Activated B cell treated with CpG ODN at 0.5 μM for 24 hours (primary cell): ENCODE measurements at regions of chr14 and their contacts with region 1.

Region 1: GRCh38 chr14:59483900-59484638 is at the starts of genes JKAMP and L3HYPDH:
- DNase-seq: peak; percentile 96
- ATAC-seq: peak; percentile 92
- H3K4me3 Mint-ChIP-seq: peak within 1 kb of the TSS; percentile 98
- H3K27ac Mint-ChIP-seq: peak within 1 kb of the TSS; percentile 96
- H3K4me1 Mint-ChIP-seq: peaks cover 52% of the 10 kb centered on the region
- H3K27me3 Mint-ChIP-seq: no peaks in the 10 kb centered on the region
- CTCF ChIP-seq: no peak
- total RNA-seq, gene JKAMP: 18.1 and 28.8 TPM in 2 replicates
- total RNA-seq, gene L3HYPDH: 22.1 and 30.2 TPM in 2 replicates

Region 2: GRCh38 chr14:58199726-58200479 is 1284.2 kb before region 1 on chr14 and contains the start of gene ACTR10:
- CTCF ChIA-PET with region 1: no interaction called
- POLR2A ChIA-PET with region 1: no interaction called
- intact Hi-C with region 1: loop called (anchors 1 kb)
- DNase-seq: peak; percentile 93
- ATAC-seq: peak; percentile 88
- H3K4me3 Mint-ChIP-seq: peak within 1 kb of the TSS; percentile 94
- H3K27ac Mint-ChIP-seq: peak within 1 kb of the TSS; percentile 93
- H3K4me1 Mint-ChIP-seq: peaks cover 28% of the 10 kb centered on the region
- H3K27me3 Mint-ChIP-seq: no peaks in the 10 kb centered on the region
- CTCF ChIP-seq: no peak
- total RNA-seq, gene ACTR10: 36.5 and 40.5 TPM in 2 replicates

Region 3: GRCh38 chr14:58427281-58428117 is 1056.6 kb before region 1 on chr14 and contains the starts of genes KIAA0586 and TIMM9:
- CTCF ChIA-PET with region 1: no interaction called
- POLR2A ChIA-PET with region 1: no interaction called
- intact Hi-C with region 1: loop called (anchors 1 kb)
- DNase-seq: peak; percentile 85
- ATAC-seq: peak; percentile 93
- H3K4me3 Mint-ChIP-seq: peak within 1 kb of the TSS; percentile 94
- H3K27ac Mint-ChIP-seq: peak within 1 kb of the TSS; percentile 97
- H3K4me1 Mint-ChIP-seq: peaks cover 46% of the 10 kb centered on the region
- H3K27me3 Mint-ChIP-seq: no peaks in the 10 kb centered on the region
- CTCF ChIP-seq: no peak
- total RNA-seq, gene KIAA0586: 18.3 and 19.8 TPM in 2 replicates
- total RNA-seq, gene TIMM9: 29.1 and 35.7 TPM in 2 replicates

Region 4: DNA sequence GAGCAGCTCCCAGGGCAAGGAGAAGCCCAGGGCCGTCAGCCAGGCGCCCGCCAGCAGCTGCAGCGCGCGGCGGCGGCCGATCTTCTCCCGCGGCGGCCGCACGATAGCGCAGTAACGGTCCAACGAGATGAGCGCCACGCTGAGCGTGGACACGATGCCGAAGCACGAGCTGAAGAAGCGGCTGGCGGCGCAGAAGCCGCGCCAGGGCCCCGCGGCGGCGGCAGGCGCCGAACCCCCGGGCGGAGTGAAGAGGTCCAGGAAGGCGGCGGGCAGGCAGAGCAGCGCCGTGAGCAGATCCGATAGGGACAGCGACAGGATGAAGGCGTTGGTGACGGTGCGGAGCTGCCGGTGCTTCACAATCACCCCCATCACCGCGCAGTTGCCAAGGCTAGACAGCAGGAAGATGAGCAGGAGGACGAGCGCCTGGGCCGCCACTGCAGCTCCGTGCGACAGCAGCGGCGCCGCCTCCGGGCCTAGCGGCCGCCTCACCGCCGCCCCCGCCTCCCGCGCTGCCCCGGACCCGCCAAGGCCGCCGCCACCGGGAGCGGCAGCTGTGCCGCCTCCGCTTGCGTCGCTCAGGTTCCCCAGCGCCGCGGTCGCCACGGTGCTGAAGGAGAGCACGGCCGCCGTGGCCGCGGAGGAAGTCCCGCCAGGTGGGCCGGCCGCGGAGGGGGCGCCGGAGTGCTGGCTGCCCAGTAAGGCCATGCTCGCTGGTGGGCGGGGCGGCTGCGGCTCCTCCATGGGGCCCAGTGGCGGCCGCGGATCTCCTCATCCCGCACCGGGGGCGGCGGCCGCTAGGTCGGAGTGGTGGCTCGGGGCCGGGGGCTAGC is 19.4 kb before region 1 on chr14:
- CTCF ChIA-PET with region 1: interaction called, 9 read pairs
- POLR2A ChIA-PET with region 1: interaction called, 13 read pairs
- intact Hi-C with region 1: loop called (anchors 1 kb)
- DNase-seq: peak; percentile 64
- ATAC-seq: peak; percentile 68
- H3K4me3 Mint-ChIP-seq: peak overlapping the region; percentile 86
- H3K27ac Mint-ChIP-seq: peak overlapping the region; percentile 48
- H3K4me1 Mint-ChIP-seq: peaks cover 14% of the 10 kb centered on the region
- H3K27me3 Mint-ChIP-seq: no peaks in the 10 kb centered on the region
- CTCF ChIP-seq: no peak

Region 5: GRCh38 chr14:59964251-59965007 is 480.4 kb after region 1 on chr14:
- CTCF ChIA-PET with region 1: no interaction called
- POLR2A ChIA-PET with region 1: no interaction called
- intact Hi-C with region 1: loop called (anchors 10 kb)
- DNase-seq: no peak
- ATAC-seq: peak; percentile 25
- H3K4me3 Mint-ChIP-seq: peak overlapping the region; percentile 86
- H3K27ac Mint-ChIP-seq: peak overlapping the region; percentile 93
- H3K4me1 Mint-ChIP-seq: peaks cover 14% of the 10 kb centered on the region
- H3K27me3 Mint-ChIP-seq: no peaks in the 10 kb centered on the region
- CTCF ChIP-seq: no peak

Region 6: GRCh38 chr14:60184146-60184904 is 700.3 kb after region 1 on chr14:
- CTCF ChIA-PET with region 1: interaction called, 8 read pairs
- POLR2A ChIA-PET with region 1: no interaction called
- intact Hi-C with region 1: loop called (anchors 1 kb)
- DNase-seq: no peak
- ATAC-seq: peak; percentile 56
- H3K4me3 Mint-ChIP-seq: peak overlapping the region; percentile 82
- H3K27ac Mint-ChIP-seq: peak overlapping the region; percentile 87
- H3K4me1 Mint-ChIP-seq: peaks cover 17% of the 10 kb centered on the region
- H3K27me3 Mint-ChIP-seq: no peaks in the 10 kb centered on the region
- CTCF ChIP-seq: peak; percentile 89